Astrocyte of the cerebellum (primary cell): ENCODE measurements at regions of chr22 and their contacts with region 1.

Region 1: GRCh38 chr22:28600546-28601143 is 79.0 kb downstream of the TTC28 start:
- DNase-seq: peak; percentile 59
- H3K4me3 ChIP-seq: no peak overlapping the region
- CTCF ChIP-seq: no peak

Region 2: DNA sequence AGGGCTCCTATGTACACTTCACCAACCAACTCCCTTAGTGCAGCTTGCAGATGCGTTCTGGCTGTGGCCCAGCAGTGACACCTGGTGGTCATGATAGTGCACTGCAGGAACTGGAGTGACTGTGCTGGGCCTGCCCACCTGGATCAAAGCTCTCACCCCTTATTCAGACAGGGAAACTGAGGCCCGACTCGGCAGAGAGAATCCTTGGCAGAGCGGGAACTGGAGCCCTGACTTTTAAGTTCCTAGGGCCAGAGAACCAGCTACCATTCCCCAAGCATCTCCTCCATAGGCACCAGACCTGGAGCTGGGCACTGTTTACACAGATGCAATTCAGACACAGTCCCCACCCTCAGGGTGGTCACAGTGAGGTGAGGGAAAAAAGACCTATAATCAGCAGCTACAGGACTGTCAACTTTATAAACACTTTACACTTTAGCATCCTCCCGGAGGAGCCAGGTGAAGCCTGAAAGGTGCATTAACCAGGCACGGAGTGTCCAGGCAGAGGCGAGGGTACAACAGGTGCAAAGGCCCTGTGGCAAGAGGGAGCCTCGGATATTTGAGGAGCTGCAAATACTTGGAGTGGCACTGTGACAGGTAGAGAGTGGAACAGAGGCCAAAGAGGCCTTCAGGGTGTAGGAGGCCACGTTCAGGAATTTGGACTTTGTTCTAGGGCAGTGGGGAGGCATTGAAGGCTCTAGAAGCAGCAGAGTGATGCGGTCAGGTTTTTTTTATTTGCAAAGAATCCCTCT is 645.2 kb after region 1 on chr22:
- in situ Hi-C with region 1: loop called (anchors 25 kb)
- DNase-seq: peak; percentile 37
- H3K4me3 ChIP-seq: no peak overlapping the region
- CTCF ChIP-seq: peak; percentile 98